H1 (cell line): ENCODE measurements at regions of chr2 and their contacts with region 1.

Region 1: GRCh38 chr2:26901326-26902183 is 53.6 kb downstream of the DPYSL5 start:
- DNase-seq: no peak
- H3K4me3 ChIP-seq: peak overlapping the region in 1 of 4 experiments; percentile 41; a peak in 1 of 8 replicates
- H3K27ac ChIP-seq: no peak overlapping the region
- H3K4me1 ChIP-seq: peaks cover 8 to 17% (median 12%) of the 10 kb centered on the region in 4 experiments; a peak in 6 of 7 replicates
- H3K27me3 ChIP-seq: 0 out of 7 replicates have a peak, but pooled peaks cover 0 to 2% (median 0%) of the 10 kb centered on the region in 4 experiments
- CTCF ChIP-seq: no peak
- EP300 ChIP-seq: no peak
- POLR2A ChIP-seq: no peak
- RAD21 ChIP-seq: no peak

Region 2: DNA sequence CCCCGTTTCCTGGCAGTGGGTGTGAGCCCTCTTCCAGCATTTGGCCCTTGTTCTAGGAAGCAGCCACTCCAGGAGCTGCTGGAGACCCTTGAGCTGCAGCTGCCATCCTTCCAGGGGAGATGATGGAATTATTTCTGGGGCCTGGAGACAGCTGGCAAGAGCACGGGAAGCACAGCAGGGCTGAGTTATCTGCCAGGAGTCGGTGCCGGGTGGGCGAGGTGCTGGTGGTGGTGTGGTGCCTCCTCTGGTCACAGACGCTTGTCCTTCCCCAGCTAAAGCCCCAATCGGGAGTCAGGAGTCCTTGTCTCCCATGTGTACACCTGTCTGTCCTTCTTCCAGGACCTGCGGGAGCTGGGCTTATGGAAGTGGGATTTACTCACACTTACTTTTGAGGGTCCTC is 17.6 kb before region 1 on chr2:
- CTCF ChIA-PET with region 1: interaction called, 12 read pairs
- POLR2A ChIA-PET with region 1: interaction called, 4 read pairs
- DNase-seq: peak in 1 of 2 experiments; percentile 43
- H3K4me3 ChIP-seq: no peak overlapping the region
- H3K27ac ChIP-seq: no peak overlapping the region
- H3K4me1 ChIP-seq: peaks cover 0 to 3% (median 0%) of the 10 kb centered on the region in 4 experiments; a peak in 1 of 7 replicates
- H3K27me3 ChIP-seq: no peaks in the 10 kb centered on the region
- CTCF ChIP-seq: no peak
- EP300 ChIP-seq: no peak
- POLR2A ChIP-seq: no peak
- RAD21 ChIP-seq: no peak

Region 3: GRCh38 chr2:27042159-27042661 is 140.7 kb after region 1 on chr2:
- CTCF ChIA-PET with region 1: no interaction called
- POLR2A ChIA-PET with region 1: no interaction called
- DNase-seq: no peak
- H3K4me3 ChIP-seq: no peak overlapping the region
- H3K27ac ChIP-seq: no peak overlapping the region
- H3K4me1 ChIP-seq: no peaks in the 10 kb centered on the region
- H3K27me3 ChIP-seq: no peaks in the 10 kb centered on the region
- CTCF ChIP-seq: no peak
- EP300 ChIP-seq: no peak
- POLR2A ChIP-seq: no peak
- RAD21 ChIP-seq: no peak